Stomach (tissue), 19 donors: ENCODE measurements at regions of chr3 and their contacts with region 1.

Region 1: DNA sequence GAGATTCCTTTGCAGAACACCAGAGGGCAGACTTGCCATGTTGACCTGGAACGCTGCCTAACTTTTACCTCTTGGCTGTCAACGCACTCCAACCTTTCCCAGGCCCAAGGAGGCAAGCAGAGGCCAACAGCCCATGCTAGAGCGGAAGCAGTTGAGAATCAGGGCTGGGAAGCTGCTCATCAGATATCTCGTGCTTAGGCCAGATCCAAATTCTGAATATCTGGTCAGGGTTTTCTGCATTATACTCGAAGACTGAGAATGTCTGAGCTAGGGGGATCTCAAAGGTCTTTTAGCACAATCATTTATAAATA is 2.5 kb downstream of the XIRP1 start:
- DNase-seq: peak; percentile 79 to 87
- H3K4me3 ChIP-seq: no peak overlapping the region
- H3K27ac ChIP-seq: peak overlapping the region in 1 of 5 donors; percentile 41
- H3K4me1 ChIP-seq: peaks cover 8 to 17% (median 10%) of the 10 kb centered on the region in 4 donors
- H3K27me3 ChIP-seq: no peaks in the 10 kb centered on the region
- CTCF ChIP-seq: peak in 3 of 7 experiments; percentile 85 to 86 (median 86)
- EP300 ChIP-seq: no peak
- POLR2A ChIP-seq: no peak

Region 2: GRCh38 chr3:39126532-39127071 is 63.3 kb before region 1 on chr3:
- intact Hi-C with region 1: loop called (anchors 5 kb)
- DNase-seq: peak in 1 of 2 donors; percentile 82
- H3K4me3 ChIP-seq: no peak overlapping the region
- H3K27ac ChIP-seq: peak overlapping the region in 1 of 5 donors; percentile 77
- H3K4me1 ChIP-seq: peaks cover 20 to 34% (median 27%) of the 10 kb centered on the region in 4 donors
- H3K27me3 ChIP-seq: no peaks in the 10 kb centered on the region
- CTCF ChIP-seq: peak in 5 of 7 experiments; percentile 39 to 76 (median 52)
- EP300 ChIP-seq: no peak
- POLR2A ChIP-seq: no peak

Region 3: GRCh38 chr3:39279745-39280517 is 90.0 kb after region 1 on chr3 and contains the start of gene CX3CR1:
- intact Hi-C with region 1: loop called (anchors 5 kb)
- DNase-seq: no peak
- H3K4me3 ChIP-seq: no peak within 1 kb of the TSS
- H3K27ac ChIP-seq: no peak within 1 kb of the TSS
- H3K4me1 ChIP-seq: no peaks in the 10 kb centered on the region
- H3K27me3 ChIP-seq: peaks cover 0 to 4% (median 0%) of the 10 kb centered on the region in 3 donors
- CTCF ChIP-seq: no peak
- EP300 ChIP-seq: no peak
- POLR2A ChIP-seq: no peak
- total RNA-seq, gene CX3CR1: 0.37 to 0.43 TPM in 2 of 5 donors, not detected in the others

Region 4: DNA sequence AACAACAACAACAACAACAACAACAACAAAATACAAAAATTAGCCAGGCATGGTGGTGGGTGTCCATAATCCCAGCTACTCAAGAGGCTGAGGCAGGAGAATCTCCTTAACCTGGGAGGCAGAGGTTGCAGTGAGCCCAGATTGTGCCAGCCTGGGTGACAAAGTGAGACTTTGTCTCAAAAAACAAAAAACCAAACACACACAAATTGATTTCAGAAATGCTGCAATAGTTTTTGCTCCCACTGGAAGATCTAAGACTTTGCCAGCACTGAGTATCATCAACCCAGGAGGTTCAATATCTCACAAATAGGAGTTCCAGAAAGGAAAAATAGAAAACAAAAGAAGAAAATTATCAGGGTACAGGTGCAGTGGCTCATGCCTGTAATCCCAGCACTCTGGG is 123.4 kb after region 1 on chr3:
- intact Hi-C with region 1: no loop called
- DNase-seq: no peak
- H3K4me3 ChIP-seq: no peak overlapping the region
- H3K27ac ChIP-seq: no peak overlapping the region
- H3K4me1 ChIP-seq: peaks cover 0 to 7% (median 0%) of the 10 kb centered on the region in 4 donors
- H3K27me3 ChIP-seq: no peaks in the 10 kb centered on the region
- CTCF ChIP-seq: no peak
- EP300 ChIP-seq: no peak
- POLR2A ChIP-seq: no peak

Region 5: GRCh38 chr3:39378088-39378487 is 188.2 kb after region 1 on chr3:
- intact Hi-C with region 1: loop called (anchors 10 kb)
- DNase-seq: peak; percentile 74 to 85
- H3K4me3 ChIP-seq: no peak overlapping the region
- H3K27ac ChIP-seq: no peak overlapping the region
- H3K4me1 ChIP-seq: peaks cover 5 to 22% (median 14%) of the 10 kb centered on the region in 4 donors
- H3K27me3 ChIP-seq: no peaks in the 10 kb centered on the region
- CTCF ChIP-seq: peak in 5 of 7 experiments; percentile 39 to 66 (median 54)
- EP300 ChIP-seq: no peak
- POLR2A ChIP-seq: no peak